Mammary epithelial cell (primary cell): ENCODE measurements at regions of chr10 and their contacts with region 1.

Region 1: GRCh38 chr10:77350711-77351119 is 286.9 kb downstream of the KCNMA1 start:
- DNase-seq: peak; percentile 98
- H3K4me3 ChIP-seq: no peak overlapping the region
- H3K27ac ChIP-seq: peak overlapping the region; percentile 69
- H3K4me1 ChIP-seq: peaks cover 40% of the 10 kb centered on the region
- H3K27me3 ChIP-seq: no peaks in the 10 kb centered on the region
- CTCF ChIP-seq: peak in 1 of 2 donors; percentile 27

Region 2: GRCh38 chr10:77195101-77195500 is 155.6 kb before region 1 on chr10:
- CTCF ChIA-PET with region 1: no interaction called
- dilution Hi-C with region 1: no loop called
- in situ Hi-C with region 1: no loop called
- intact Hi-C with region 1: loop called (anchors 10 kb)
- DNase-seq: peak; percentile 94
- H3K4me3 ChIP-seq: no peak overlapping the region
- H3K27ac ChIP-seq: peak overlapping the region; percentile 48
- H3K4me1 ChIP-seq: peaks cover 29% of the 10 kb centered on the region
- H3K27me3 ChIP-seq: no peaks in the 10 kb centered on the region
- CTCF ChIP-seq: no peak

Region 3: DNA sequence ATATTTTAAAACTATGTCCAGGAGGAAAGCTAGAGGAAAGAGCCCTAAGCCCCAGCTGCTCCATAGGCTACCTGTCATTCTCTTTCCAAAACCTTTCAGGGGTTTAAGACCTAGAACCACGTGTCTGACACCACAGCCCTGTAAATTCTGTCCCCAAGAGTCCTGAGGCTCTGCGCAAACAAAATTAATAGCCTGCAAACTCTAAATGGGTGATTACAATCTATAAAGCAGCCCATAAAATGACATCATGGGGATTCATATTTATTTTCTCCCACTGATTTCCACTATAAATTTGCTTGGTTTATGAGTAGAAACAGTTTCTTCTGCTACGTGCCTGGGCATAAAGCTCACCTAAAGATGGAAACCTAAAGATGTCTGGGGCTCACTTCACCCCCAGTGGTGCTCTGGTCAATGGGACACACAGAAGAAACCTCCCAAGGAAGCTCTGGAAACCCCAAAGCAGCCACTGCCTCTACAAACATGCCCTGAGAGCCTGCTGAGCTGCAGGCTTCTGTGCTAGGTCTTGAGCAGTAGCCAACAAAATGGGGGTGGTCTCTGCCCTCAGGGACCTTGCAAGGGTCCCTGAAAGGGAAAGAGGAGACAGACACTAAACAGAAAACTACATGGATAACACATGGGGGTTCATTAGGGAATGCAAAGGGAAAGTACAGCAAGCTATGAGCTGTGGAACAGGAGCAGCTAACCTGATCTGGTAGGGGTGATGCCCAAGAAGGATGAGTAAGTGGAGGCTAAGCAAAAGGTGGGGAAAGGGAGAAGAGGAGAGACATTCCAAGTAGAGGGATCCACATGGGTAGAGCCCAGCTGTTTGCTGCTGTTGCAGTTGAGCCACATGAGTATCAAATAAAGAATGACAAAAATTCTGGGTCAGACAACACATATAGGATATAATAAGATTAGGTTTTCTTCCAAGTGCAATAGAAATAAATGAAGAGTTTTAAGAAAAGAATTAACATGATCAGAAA is 44.8 kb before region 1 on chr10:
- CTCF ChIA-PET with region 1: no interaction called
- dilution Hi-C with region 1: loop called (anchors 5 kb)
- in situ Hi-C with region 1: no loop called
- intact Hi-C with region 1: no loop called
- DNase-seq: no peak
- H3K4me3 ChIP-seq: no peak overlapping the region
- H3K27ac ChIP-seq: no peak overlapping the region
- H3K4me1 ChIP-seq: peaks cover 8% of the 10 kb centered on the region
- H3K27me3 ChIP-seq: no peaks in the 10 kb centered on the region
- CTCF ChIP-seq: no peak

Region 4: DNA sequence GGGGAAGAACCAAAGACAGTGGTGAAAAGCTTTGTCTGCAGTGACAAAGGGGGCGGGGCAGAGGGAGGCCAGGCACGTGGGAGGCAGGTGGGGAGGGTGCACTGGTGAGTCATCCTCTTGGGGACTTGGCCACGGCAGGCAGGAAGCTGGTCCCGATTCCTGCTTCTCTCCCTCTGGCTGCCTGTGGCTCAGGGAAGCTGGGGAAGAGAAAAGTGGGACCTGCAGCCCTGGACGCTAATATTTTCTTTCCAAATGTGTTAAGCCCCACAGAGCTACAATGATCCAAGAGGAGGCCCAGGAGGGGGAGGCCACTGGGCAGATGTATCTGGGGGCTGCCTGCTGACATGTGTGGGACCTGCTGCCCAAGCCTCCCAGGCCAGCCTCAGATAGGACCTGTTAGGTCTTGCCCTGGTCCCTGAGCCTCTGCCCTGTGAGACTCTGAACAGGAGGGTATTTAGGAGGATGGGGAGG is 55.1 kb after region 1 on chr10:
- CTCF ChIA-PET with region 1: no interaction called
- dilution Hi-C with region 1: no loop called
- in situ Hi-C with region 1: no loop called
- intact Hi-C with region 1: no loop called
- DNase-seq: peak; percentile 66
- H3K4me3 ChIP-seq: no peak overlapping the region
- H3K27ac ChIP-seq: no peak overlapping the region
- H3K4me1 ChIP-seq: peaks cover 39% of the 10 kb centered on the region
- H3K27me3 ChIP-seq: no peaks in the 10 kb centered on the region
- CTCF ChIP-seq: no peak